ENCODE measurements at regions of chr4 and their contacts with region 1.

Region 1: GRCh38 chr4:184474263-184475095 is at the start of gene IRF2:
- DNase-seq: peak; percentile 86
- ATAC-seq: peak; percentile 80
- H3K4me3 Mint-ChIP-seq: peak within 1 kb of the TSS; percentile 94
- H3K27ac Mint-ChIP-seq: peak within 1 kb of the TSS; percentile 96
- H3K4me1 Mint-ChIP-seq: peaks cover 63% of the 10 kb centered on the region
- H3K27me3 Mint-ChIP-seq: no peaks in the 10 kb centered on the region
- CTCF ChIP-seq: no peak
- total RNA-seq, gene IRF2: 65.5 and 66.2 TPM in 2 replicates

Region 2: DNA sequence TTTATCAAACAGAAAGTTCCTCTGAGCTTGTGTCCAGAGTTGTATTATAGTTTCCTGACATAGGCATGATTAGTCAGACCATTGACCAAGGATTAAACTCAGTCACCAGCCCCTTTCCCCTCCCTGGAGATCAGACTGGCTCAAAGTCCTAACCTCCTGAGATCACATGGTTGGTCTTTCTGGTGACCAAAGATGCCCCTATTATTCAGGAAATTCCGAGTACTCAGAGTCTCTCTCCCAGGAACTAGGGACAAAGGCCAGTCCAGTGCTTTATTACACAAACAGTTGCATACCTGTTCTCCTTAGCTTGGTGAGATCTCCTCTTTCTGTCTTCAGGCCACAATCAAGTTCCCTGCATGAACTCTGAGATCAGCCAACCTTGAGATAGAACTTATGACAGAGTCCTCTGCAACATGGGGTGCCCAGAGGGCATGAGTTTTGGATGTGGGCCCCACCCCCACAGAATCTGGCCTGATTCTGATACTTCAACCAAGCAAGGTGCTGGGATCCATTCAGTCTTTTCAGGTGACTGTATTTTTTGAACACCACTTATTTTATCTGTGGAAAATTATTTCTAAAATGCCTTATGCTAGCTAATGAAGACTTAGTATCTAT is 242.2 kb before region 1 on chr4:
- CTCF ChIA-PET with region 1: no interaction called
- POLR2A ChIA-PET with region 1: no interaction called
- intact Hi-C with region 1: no loop called
- DNase-seq: no peak
- ATAC-seq: no peak
- H3K4me3 Mint-ChIP-seq: no peak overlapping the region
- H3K27ac Mint-ChIP-seq: no peak overlapping the region
- H3K4me1 Mint-ChIP-seq: peaks cover 9% of the 10 kb centered on the region
- H3K27me3 Mint-ChIP-seq: peaks cover 35% of the 10 kb centered on the region
- CTCF ChIP-seq: no peak

Region 3: GRCh38 chr4:184310171-184310567 is 164.3 kb before region 1 on chr4:
- CTCF ChIA-PET with region 1: no interaction called
- POLR2A ChIA-PET with region 1: interaction called, 18 read pairs
- intact Hi-C with region 1: loop called (anchors 1 kb)
- DNase-seq: no peak
- ATAC-seq: peak; percentile 23
- H3K4me3 Mint-ChIP-seq: no peak overlapping the region
- H3K27ac Mint-ChIP-seq: peak overlapping the region; percentile 51
- H3K4me1 Mint-ChIP-seq: peaks cover 61% of the 10 kb centered on the region
- H3K27me3 Mint-ChIP-seq: no peaks in the 10 kb centered on the region
- CTCF ChIP-seq: no peak

Region 4: GRCh38 chr4:184395971-184396391 is 78.5 kb before region 1 on chr4:
- CTCF ChIA-PET with region 1: no interaction called
- POLR2A ChIA-PET with region 1: interaction called, 16 read pairs
- intact Hi-C with region 1: loop called (anchors 1 kb)
- DNase-seq: no peak
- ATAC-seq: peak; percentile 77
- H3K4me3 Mint-ChIP-seq: peak overlapping the region; percentile 81
- H3K27ac Mint-ChIP-seq: peak overlapping the region; percentile 95
- H3K4me1 Mint-ChIP-seq: peaks cover 46% of the 10 kb centered on the region
- H3K27me3 Mint-ChIP-seq: no peaks in the 10 kb centered on the region
- CTCF ChIP-seq: no peak

Region 5: DNA sequence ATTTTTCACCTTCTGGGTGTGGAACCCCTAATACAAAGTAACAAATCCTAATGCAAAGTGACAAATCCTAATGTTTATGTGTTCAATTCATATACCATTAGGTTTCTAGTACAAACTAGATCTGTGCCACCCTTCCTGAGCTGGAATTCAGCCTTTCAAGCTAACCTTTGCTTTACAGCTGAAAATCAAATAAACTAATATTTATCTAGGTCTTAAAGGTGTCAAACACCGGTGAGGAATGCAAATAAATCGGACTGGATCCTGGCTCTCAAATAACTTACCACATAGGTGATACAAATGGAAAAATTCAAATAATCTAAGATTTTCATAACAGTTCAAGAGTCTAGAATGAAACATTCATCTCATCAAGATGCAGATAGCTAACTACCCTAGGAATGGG is 11.8 kb before region 1 on chr4:
- CTCF ChIA-PET with region 1: interaction called, 4 read pairs
- POLR2A ChIA-PET with region 1: interaction called, 12 read pairs
- intact Hi-C with region 1: loop called (anchors 1 kb)
- DNase-seq: no peak
- ATAC-seq: no peak
- H3K4me3 Mint-ChIP-seq: no peak overlapping the region
- H3K27ac Mint-ChIP-seq: peak overlapping the region; percentile 80
- H3K4me1 Mint-ChIP-seq: peaks cover 92% of the 10 kb centered on the region
- H3K27me3 Mint-ChIP-seq: no peaks in the 10 kb centered on the region
- CTCF ChIP-seq: no peak

Region 6: GRCh38 chr4:184649026-184649970 is 174.8 kb after region 1 on chr4 and contains the starts of genes CASP3 and PRIMPOL:
- CTCF ChIA-PET with region 1: no interaction called
- POLR2A ChIA-PET with region 1: interaction called, 21 read pairs
- intact Hi-C with region 1: loop called (anchors 1 kb)
- DNase-seq: peak; percentile 98
- ATAC-seq: peak; percentile 92
- H3K4me3 Mint-ChIP-seq: peak within 1 kb of the TSS; percentile 94
- H3K27ac Mint-ChIP-seq: peak within 1 kb of the TSS; percentile 89
- H3K4me1 Mint-ChIP-seq: peaks cover 43% of the 10 kb centered on the region
- H3K27me3 Mint-ChIP-seq: no peaks in the 10 kb centered on the region
- CTCF ChIP-seq: no peak
- total RNA-seq, gene CASP3: 24.0 and 24.9 TPM in 2 replicates
- total RNA-seq, gene PRIMPOL: 9.1 and 11.6 TPM in 2 replicates

Region 7: GRCh38 chr4:185395956-185396723 is 921.7 kb after region 1 on chr4:
- CTCF ChIA-PET with region 1: no interaction called
- POLR2A ChIA-PET with region 1: no interaction called
- intact Hi-C with region 1: loop called (anchors 1 kb)
- DNase-seq: peak; percentile 98
- ATAC-seq: peak; percentile 89
- H3K4me3 Mint-ChIP-seq: peak overlapping the region; percentile 94
- H3K27ac Mint-ChIP-seq: peak overlapping the region; percentile 94
- H3K4me1 Mint-ChIP-seq: peaks cover 63% of the 10 kb centered on the region
- H3K27me3 Mint-ChIP-seq: no peaks in the 10 kb centered on the region
- CTCF ChIP-seq: no peak

Measured in activated B cell treated with CpG ODN at 0.5 μM for 24 hours (primary cell).